Heart right ventricle (tissue), 16 donors: ENCODE measurements at regions of chr22 and their contacts with region 1.

Region 1: GRCh38 chr22:50641696-50642607 is 14.0 kb upstream of the ARSA start:
- DNase-seq: peak; percentile 41
- ATAC-seq: peak; percentile 75 to 89 (median 83)
- H3K4me3 ChIP-seq: peak overlapping the region in 2 of 10 donors; percentile 13 to 18
- H3K27ac ChIP-seq: peak overlapping the region; percentile 40 to 94 (median 64)
- H3K4me1 ChIP-seq: peaks cover 11 to 25% (median 16%) of the 10 kb centered on the region in 9 donors
- H3K27me3 ChIP-seq: peaks cover 0 to 40% (median 23%) of the 10 kb centered on the region in 7 donors
- CTCF ChIP-seq: peak in 8 of 9 donors; percentile 20 to 68 (median 46)

Region 2: DNA sequence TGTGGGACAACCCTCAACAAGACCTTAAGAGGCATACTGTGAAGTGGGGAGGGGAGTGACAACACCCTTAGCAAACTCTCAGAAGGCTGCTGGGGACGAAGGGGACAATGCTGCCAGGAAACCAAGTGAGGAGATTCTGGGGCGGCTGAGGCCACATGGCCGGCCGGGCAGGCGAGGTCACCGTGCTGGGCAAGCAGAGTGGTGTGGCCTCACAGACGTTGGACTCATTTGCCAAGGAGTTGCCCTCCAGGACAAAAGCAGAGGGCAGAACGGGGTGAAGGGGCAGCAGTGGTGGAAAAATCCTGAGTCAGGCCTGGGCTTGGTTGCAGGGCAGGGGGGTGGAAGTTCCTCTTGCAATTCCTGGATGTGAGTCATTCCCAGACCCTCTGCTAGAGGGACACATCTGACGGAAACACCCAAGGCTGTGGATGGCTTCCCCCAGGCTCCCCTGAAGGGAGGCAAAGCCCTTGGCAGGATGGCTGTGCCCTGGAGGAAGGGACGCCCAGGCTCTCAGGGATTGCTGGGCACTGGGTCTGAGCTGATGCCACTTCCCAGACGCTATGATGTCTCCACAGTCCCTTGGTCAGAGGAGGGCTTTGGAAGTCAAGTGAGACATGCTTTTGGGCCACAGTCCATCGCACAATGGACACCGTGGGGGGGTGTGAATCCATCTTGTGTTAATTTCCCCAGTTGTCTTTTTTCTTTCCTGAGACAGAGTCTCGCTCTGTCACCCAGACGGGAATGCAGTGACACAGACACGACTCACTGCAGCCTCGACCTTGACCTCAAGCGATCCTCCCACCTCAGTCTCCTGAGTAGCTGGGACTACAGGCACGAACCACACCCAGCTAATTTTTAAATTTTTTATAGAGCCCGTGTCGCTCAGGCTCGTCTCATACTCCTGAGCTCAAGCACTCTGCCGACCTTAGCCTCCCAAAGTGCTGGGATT is 14.4 kb after region 1 on chr22:
- intact Hi-C with region 1: loop called in 1 of 10 experiments (anchors 2 kb)
- DNase-seq: peak; percentile 30 to 75
- ATAC-seq: peak; percentile 76 to 95 (median 92)
- H3K4me3 ChIP-seq: peak overlapping the region in 3 of 10 donors; percentile 15 to 25 (median 22)
- H3K27ac ChIP-seq: peak overlapping the region; percentile 54 to 87 (median 78)
- H3K4me1 ChIP-seq: peaks cover 0 to 43% (median 19%) of the 10 kb centered on the region in 9 donors
- H3K27me3 ChIP-seq: peaks cover 0 to 30% (median 8%) of the 10 kb centered on the region in 7 donors
- CTCF ChIP-seq: no peak

Region 3: GRCh38 chr22:50674606-50675549 is 32.9 kb after region 1 on chr22:
- intact Hi-C with region 1: loop called in 1 of 10 experiments (anchors 1 kb)
- DNase-seq: no peak
- ATAC-seq: no peak
- H3K4me3 ChIP-seq: peak overlapping the region; percentile 37 to 67 (median 57)
- H3K27ac ChIP-seq: peak overlapping the region; percentile 40 to 83 (median 68)
- H3K4me1 ChIP-seq: peaks cover 0 to 69% (median 29%) of the 10 kb centered on the region in 9 donors
- H3K27me3 ChIP-seq: peaks cover 6 to 57% (median 32%) of the 10 kb centered on the region in 7 donors
- CTCF ChIP-seq: no peak

Region 4: GRCh38 chr22:50691521-50691920 is 49.6 kb after region 1 on chr22:
- intact Hi-C with region 1: loop called in 2 of 10 experiments (anchors 5 kb)
- DNase-seq: peak in 1 of 2 donors; percentile 4
- ATAC-seq: no peak
- H3K4me3 ChIP-seq: no peak overlapping the region
- H3K27ac ChIP-seq: peak overlapping the region in 1 of 10 donors; percentile 15
- H3K4me1 ChIP-seq: peaks cover 2 to 88% (median 35%) of the 10 kb centered on the region in 9 donors
- H3K27me3 ChIP-seq: peaks cover 0 to 17% (median 0%) of the 10 kb centered on the region in 7 donors
- CTCF ChIP-seq: peak in 7 of 9 donors; percentile 29 to 57 (median 37)